Natural killer cell (primary cell): ENCODE measurements at regions of chr3 and their contacts with region 1.

Region 1: GRCh38 chr3:49539659-49540560 is 14.4 kb upstream of the BSN start:
- DNase-seq: peak; percentile 94 to 95
- ATAC-seq: peak; percentile 95 to 98 (median 97)
- H3K4me3 ChIP-seq: peak overlapping the region; percentile 51
- H3K4me3 Mint-ChIP-seq: peak overlapping the region; percentile 76
- H3K27ac ChIP-seq: peak overlapping the region; percentile 51
- H3K27ac Mint-ChIP-seq: peak overlapping the region; percentile 26 to 82
- H3K4me1 ChIP-seq: peaks cover 11% of the 10 kb centered on the region
- H3K4me1 Mint-ChIP-seq: peaks cover 6 to 9% of the 10 kb centered on the region in 2 donors
- H3K27me3 ChIP-seq: no peaks in the 10 kb centered on the region
- H3K27me3 Mint-ChIP-seq: peaks cover 12 to 13% of the 10 kb centered on the region in 2 donors
- CTCF ChIP-seq: peak; percentile 79

Region 2: DNA sequence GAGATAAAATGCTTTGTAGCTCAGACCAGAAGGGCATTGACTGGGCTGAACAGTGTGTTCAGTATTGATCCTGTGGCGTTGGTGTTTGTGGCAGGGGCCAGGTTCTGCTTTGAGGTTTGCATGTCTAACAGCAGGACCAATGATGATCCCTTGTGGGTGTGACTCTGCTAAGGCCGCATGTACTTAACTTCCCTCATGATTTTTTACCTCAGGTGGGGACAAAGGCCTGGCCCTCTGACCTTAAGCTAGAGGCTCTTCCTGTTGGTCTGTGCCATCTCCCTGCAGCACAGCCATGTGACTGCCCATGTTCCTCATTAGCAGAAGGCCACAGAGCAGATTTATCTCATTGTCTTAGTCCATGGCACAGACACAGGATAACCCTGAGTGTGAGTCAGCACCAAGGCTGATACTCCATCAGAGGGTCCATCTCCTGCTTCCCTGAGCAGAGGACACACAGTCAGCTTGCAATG is 20.0 kb before region 1 on chr3:
- intact Hi-C with region 1: no loop called
- DNase-seq: no peak
- ATAC-seq: peak in 2 of 3 donors; percentile 50 to 56
- H3K4me3 ChIP-seq: no peak overlapping the region
- H3K4me3 Mint-ChIP-seq: no peak overlapping the region
- H3K27ac ChIP-seq: no peak overlapping the region
- H3K27ac Mint-ChIP-seq: peak overlapping the region; percentile 51 to 53
- H3K4me1 ChIP-seq: peaks cover 6% of the 10 kb centered on the region
- H3K4me1 Mint-ChIP-seq: peaks cover 44 to 45% of the 10 kb centered on the region in 2 donors
- H3K27me3 ChIP-seq: no peaks in the 10 kb centered on the region
- H3K27me3 Mint-ChIP-seq: no peaks in the 10 kb centered on the region
- CTCF ChIP-seq: no peak

Region 3: DNA sequence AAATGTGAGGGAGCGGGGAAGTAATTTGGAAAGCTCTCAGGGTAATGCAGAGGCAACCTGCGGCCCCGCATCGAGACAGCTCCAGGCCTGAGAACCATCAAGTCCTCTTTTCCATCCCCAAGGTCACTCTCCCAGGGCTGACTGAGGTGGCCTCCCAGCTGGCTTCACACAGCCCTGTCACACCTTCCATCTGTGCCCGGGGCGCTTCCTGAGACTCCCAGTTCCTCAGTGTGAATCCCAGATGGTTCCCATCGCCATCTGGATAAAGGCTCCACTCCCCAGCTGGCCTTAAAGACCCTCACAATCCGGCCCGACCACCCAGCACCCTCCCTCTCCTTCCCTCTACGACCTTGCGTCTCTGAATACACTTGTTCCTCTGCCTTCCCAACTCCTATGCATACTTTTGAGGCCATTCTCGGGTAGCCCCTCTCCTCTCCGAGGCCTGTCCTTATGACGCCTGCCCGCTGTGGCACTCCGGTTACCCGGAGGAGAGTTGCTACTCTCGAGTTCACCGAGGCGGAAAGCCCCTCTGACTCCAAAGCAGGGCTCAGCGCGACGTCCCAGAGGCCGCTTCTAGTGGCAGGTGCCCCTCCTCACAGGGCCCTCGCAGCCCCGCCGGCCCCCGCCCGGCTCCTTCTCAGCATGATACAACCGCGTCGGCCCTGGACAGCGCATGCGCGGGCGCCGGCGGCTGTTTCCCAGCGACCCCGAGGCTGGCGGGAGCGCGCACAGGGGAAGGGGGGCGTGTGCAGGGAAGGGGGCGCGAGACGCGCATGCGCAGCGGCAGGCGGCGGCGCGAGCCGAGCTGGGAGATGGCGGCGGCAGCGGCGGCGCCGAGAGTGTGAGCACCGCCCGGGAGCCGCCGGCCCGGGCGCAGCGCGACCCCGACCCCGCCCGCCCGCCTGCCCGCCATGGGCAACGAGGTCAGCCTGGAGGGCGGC is 14.1 kb after region 1 on chr3 and contains the start of gene BSN:
- intact Hi-C with region 1: loop called (anchors 1 kb)
- DNase-seq: peak; percentile 84 to 94
- ATAC-seq: peak; percentile 88 to 91 (median 90)
- H3K4me3 ChIP-seq: peak within 1 kb of the TSS; percentile 54
- H3K4me3 Mint-ChIP-seq: peak within 1 kb of the TSS; percentile 85
- H3K27ac ChIP-seq: no peak within 1 kb of the TSS
- H3K27ac Mint-ChIP-seq: peak within 1 kb of the TSS; percentile 46 to 80
- H3K4me1 ChIP-seq: peaks cover 12% of the 10 kb centered on the region
- H3K4me1 Mint-ChIP-seq: peaks cover 6 to 8% of the 10 kb centered on the region in 2 donors
- H3K27me3 ChIP-seq: peaks cover 25% of the 10 kb centered on the region
- H3K27me3 Mint-ChIP-seq: peaks cover 28 to 30% of the 10 kb centered on the region in 2 donors
- CTCF ChIP-seq: no peak
- total RNA-seq, gene BSN: 0.33 to 0.41 (median 0.35) TPM

Region 4: DNA sequence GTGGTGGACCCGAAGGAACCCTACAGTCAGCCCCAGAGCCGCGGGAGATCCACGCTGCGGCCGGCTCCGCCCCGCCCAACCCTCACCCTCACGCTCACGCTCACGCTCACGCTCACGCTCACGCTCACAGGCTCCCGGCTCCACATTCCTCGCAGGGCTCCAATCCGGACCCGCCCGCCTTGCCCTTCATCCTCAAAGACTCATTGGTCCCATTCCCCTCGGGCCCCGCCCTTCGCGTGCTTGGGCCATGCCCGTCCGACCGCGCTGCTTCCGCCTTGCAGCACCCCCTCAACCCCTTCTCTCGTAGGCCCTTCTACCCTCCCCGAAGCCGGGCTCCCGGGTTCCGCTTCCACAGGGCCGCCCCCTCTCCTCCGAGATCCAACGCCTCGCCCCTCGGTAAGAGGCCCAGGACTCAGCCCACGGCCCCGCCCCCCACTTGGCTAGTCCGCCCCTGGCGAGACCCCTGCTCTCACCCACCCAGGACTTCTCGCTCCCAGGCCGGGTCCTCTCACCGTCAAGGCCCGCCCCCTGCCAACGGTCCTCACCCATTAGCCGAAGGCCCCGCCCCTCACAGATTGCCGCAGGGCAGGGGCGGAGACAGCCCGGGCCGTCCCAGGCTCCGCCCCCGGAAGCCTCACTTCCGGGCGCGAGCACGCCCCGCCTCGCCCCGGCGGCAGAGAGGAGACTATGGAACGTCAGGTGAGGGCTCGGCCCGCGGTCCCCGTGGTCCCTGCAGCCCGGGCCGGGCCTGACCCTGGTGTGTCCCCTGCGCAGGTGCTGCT is 134.0 kb after region 1 on chr3 and contains the start of gene APEH:
- intact Hi-C with region 1: loop called (anchors 1 kb)
- DNase-seq: peak; percentile 96 to 98
- ATAC-seq: peak; percentile 88 to 95 (median 89)
- H3K4me3 ChIP-seq: peak within 1 kb of the TSS; percentile 80
- H3K4me3 Mint-ChIP-seq: peak within 1 kb of the TSS; percentile 95
- H3K27ac ChIP-seq: peak within 1 kb of the TSS; percentile 98
- H3K27ac Mint-ChIP-seq: peak within 1 kb of the TSS; percentile 94 to 100
- H3K4me1 ChIP-seq: peaks cover 23% of the 10 kb centered on the region
- H3K4me1 Mint-ChIP-seq: peaks cover 14 to 33% of the 10 kb centered on the region in 2 donors
- H3K27me3 ChIP-seq: no peaks in the 10 kb centered on the region
- H3K27me3 Mint-ChIP-seq: no peaks in the 10 kb centered on the region
- CTCF ChIP-seq: no peak
- total RNA-seq, gene APEH: 62.8 to 95.7 (median 77.5) TPM

Region 5: DNA sequence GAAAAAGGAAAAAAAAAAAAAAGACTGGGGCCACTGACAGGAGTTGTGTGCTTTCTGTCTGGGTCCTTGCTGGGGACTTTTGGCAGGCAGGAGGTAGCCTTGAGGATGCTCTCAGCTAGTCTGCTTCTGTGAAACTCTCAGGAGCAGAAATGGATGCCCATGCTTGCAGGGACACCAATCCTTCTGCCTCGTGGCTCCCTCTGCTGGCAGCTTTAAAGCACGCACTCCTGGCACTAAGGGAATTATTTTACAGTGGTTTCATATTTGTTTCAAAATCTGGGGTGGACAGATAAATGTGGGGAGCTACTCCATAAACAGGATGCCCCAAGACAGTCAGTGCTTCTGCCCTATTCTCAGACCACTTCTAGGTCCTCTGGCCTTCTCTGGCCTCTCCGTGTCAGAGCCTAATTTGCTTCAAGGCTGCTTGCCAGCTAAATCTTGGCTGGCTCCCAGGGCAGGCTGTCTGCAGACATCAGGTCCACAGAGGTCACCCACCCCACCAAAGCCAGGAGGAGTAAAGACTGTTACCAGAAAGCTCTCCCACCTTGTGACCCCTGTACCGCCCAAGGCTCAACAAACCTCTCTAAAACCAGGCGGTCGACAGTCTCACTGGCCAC is 299.4 kb after region 1 on chr3:
- intact Hi-C with region 1: loop called (anchors 1 kb)
- DNase-seq: peak; percentile 72 to 93
- ATAC-seq: peak; percentile 89 to 99 (median 97)
- H3K4me3 ChIP-seq: no peak overlapping the region
- H3K4me3 Mint-ChIP-seq: no peak overlapping the region
- H3K27ac ChIP-seq: no peak overlapping the region
- H3K27ac Mint-ChIP-seq: no peak overlapping the region
- H3K4me1 ChIP-seq: no peaks in the 10 kb centered on the region
- H3K4me1 Mint-ChIP-seq: no peaks in the 10 kb centered on the region
- H3K27me3 ChIP-seq: no peaks in the 10 kb centered on the region
- H3K27me3 Mint-ChIP-seq: no peaks in the 10 kb centered on the region
- CTCF ChIP-seq: peak; percentile 76